Natural killer cell (primary cell): ENCODE measurements at regions of chr10 and their contacts with region 1.

Region 1: DNA sequence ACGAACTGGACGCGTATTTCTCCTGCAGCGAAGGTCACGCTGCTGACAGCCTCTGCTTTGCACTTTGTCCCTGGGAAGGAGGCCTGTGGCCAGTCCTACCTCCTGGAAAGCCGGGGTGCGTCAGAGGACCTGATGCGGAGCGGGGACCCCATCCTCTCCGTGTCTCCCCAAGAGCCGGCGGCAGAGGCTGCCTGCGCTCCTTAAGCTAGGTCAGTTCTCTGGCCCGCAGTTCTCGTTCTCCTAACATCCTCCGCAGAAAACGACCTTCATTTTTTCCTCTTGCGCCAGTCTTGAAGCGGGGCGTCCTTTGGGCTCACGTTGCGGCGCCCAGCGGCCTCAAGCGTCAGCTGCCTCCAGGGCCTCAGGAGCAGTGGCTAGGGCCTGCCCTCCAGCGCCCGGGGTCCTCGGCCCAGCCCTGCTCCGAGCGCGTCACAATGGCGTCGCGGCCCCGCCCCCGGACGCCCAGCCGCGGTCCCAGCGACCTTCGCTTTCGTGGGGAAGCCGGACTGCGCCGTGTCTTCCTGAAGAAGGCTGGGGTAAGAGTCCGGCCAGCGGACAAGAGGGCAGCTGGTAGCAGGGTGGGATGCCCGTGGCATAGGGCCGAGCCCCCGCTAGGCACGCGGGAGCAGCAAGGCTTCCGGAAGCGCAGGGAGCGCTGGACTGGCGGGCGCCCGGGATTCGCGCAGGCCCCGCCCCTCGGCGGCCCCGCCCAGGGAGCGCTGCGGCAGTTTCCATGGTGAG is at the start of gene ZNF487:
- DNase-seq: peak; percentile 88 to 93
- ATAC-seq: peak; percentile 90 to 98 (median 93)
- H3K4me3 ChIP-seq: peak within 1 kb of the TSS; percentile 86
- H3K4me3 Mint-ChIP-seq: peak within 1 kb of the TSS; percentile 98
- H3K27ac ChIP-seq: peak within 1 kb of the TSS; percentile 97
- H3K27ac Mint-ChIP-seq: peak within 1 kb of the TSS; percentile 98 to 99
- H3K4me1 ChIP-seq: peaks cover 25% of the 10 kb centered on the region
- H3K4me1 Mint-ChIP-seq: peaks cover 14 to 24% of the 10 kb centered on the region in 2 donors
- H3K27me3 ChIP-seq: no peaks in the 10 kb centered on the region
- H3K27me3 Mint-ChIP-seq: no peaks in the 10 kb centered on the region
- CTCF ChIP-seq: peak; percentile 7
- total RNA-seq, gene ZNF487: 19.1 to 30.8 (median 22.8) TPM

Region 2: GRCh38 chr10:43420369-43421200 is 16.0 kb before region 1 on chr10:
- intact Hi-C with region 1: loop called (anchors 2 kb)
- DNase-seq: peak; percentile 68 to 92
- ATAC-seq: peak; percentile 63 to 89 (median 81)
- H3K4me3 ChIP-seq: peak overlapping the region; percentile 77
- H3K4me3 Mint-ChIP-seq: peak overlapping the region; percentile 97
- H3K27ac ChIP-seq: peak overlapping the region; percentile 96
- H3K27ac Mint-ChIP-seq: peak overlapping the region; percentile 97
- H3K4me1 ChIP-seq: peaks cover 50% of the 10 kb centered on the region
- H3K4me1 Mint-ChIP-seq: peaks cover 35 to 41% of the 10 kb centered on the region in 2 donors
- H3K27me3 ChIP-seq: no peaks in the 10 kb centered on the region
- H3K27me3 Mint-ChIP-seq: no peaks in the 10 kb centered on the region
- CTCF ChIP-seq: no peak

Region 3: DNA sequence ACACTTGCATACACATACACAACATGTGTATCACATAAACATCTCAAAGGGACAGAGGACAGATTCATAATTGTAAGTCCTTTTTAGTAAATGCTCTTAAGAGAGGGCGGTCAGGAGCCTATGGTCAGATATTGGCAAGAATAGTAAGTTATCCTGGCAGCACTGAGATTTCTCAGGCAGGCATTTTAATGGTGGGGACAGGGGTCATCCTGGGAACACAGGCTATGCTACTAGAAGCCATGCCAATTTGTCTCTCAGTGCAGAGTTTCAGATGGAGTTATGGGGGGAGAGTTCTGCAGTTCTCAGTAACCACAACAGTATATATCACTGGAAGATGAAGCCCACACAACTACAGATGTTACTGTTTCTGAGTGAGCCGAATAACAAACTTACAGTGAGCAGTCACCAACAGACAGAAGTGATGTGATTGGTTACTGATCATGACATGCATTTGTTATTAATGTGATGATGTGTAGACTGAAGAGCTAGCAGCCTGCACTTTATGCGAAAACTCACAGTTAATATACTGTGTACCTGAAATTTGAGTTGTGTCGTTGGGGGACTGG is 16.8 kb after region 1 on chr10:
- intact Hi-C with region 1: no loop called
- DNase-seq: peak in 1 of 2 donors; percentile 27
- ATAC-seq: no peak
- H3K4me3 ChIP-seq: no peak overlapping the region
- H3K4me3 Mint-ChIP-seq: peak overlapping the region; percentile 72
- H3K27ac ChIP-seq: peak overlapping the region; percentile 88
- H3K27ac Mint-ChIP-seq: peak overlapping the region; percentile 98 to 99
- H3K4me1 ChIP-seq: peaks cover 60% of the 10 kb centered on the region
- H3K4me1 Mint-ChIP-seq: peaks cover 39 to 42% of the 10 kb centered on the region in 2 donors
- H3K27me3 ChIP-seq: no peaks in the 10 kb centered on the region
- H3K27me3 Mint-ChIP-seq: no peaks in the 10 kb centered on the region
- CTCF ChIP-seq: no peak